ENCODE measurements at regions of chr17 and their contacts with region 1.

Region 1: DNA sequence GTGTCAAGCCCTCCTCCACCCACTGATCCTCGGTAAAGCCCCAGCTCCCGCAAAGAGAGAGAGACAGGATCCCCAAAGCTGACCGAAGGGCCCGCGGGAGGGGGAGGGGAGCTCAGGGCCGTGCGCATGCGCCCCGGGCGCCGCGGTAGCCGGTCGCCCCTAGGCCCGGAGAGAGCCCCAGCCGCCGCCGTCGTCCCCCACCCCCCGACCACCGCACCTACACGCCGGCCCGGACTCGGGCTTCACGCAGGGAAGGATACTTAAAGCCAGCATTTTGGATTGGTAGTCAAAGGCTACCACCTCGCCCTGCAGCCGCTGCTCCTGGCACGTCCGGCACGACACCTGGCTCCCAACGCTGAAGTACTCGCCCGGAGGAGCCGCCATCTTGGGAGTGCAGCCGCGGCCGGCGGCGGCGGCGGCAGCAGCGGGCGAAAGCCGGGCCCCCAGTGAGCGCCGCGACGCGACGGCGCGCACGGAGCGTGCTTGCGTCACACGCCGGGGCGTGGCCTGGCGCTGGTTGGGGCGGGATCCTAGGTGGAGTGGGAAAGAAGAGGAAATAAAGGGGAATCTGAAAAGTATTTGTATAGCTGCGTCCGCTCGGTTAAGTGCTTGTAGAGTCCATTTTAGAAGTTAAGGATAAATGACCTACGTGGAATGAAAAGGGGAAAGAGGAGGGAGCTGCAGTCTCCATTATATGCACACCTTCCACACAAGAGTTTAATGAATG is at the start of gene LSM12:
- DNase-seq: peak; percentile 89
- H3K4me3 Mint-ChIP-seq: peak within 1 kb of the TSS; percentile 98
- H3K27ac Mint-ChIP-seq: peak within 1 kb of the TSS; percentile 93
- H3K4me1 Mint-ChIP-seq: peaks cover 56% of the 10 kb centered on the region
- H3K27me3 Mint-ChIP-seq: no peaks in the 10 kb centered on the region
- total RNA-seq, gene LSM12: 59.3 to 64.8 TPM

Region 2: GRCh38 chr17:44044067-44044466 is 22.3 kb before region 1 on chr17:
- CTCF ChIA-PET with region 1: interaction called, 10 read pairs
- POLR2A ChIA-PET with region 1: no interaction called
- DNase-seq: no peak
- H3K4me3 Mint-ChIP-seq: no peak overlapping the region
- H3K27ac Mint-ChIP-seq: no peak overlapping the region
- H3K4me1 Mint-ChIP-seq: peaks cover 24% of the 10 kb centered on the region
- H3K27me3 Mint-ChIP-seq: no peaks in the 10 kb centered on the region